ENCODE measurements at regions of chr17 and their contacts with region 1.

Region 1: DNA sequence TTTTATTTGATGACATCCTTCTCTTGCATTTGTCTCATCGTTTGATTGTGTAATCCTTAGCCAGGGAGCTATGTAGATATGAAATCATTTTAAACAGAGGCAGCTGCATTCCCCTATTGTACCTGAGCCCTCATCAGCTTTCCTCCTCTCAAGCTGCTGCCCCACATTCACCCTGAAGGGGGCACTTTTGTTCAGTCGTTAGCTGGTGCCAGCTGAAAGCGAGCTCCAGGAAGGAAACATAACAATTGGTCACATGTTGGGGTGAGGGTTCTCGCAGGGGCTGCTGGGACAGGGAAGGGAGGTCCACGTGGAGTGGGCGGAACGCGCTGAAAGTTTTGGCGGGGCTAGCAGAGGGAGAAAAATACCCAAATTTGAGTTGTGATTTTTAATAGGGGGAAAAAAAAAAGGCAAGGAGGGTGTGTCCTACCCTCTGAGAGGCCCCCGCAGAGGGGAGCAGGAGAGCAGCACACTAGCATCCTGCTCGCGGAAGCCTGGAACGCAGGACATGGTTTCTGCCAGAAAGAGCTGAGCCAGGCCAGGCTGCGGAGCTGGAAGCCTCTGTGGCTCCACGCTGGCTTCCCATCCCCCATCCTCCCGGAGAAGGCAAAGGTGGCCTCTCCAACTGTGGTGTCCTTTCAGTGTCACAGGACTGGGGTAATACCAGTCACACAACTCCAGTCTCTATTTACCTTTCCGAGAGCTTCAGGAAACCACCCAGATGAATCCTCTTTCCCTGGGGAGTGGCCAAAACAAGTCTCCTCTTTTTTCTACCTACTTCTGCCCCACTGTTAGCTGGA is 8.5 kb upstream of the MSL1 start:
- DNase-seq: peak; percentile 92
- ATAC-seq: peak; percentile 35
- H3K4me3 Mint-ChIP-seq: peak overlapping the region; percentile 58
- H3K27ac Mint-ChIP-seq: peak overlapping the region; percentile 98
- H3K4me1 Mint-ChIP-seq: peaks cover 72% of the 10 kb centered on the region
- H3K27me3 Mint-ChIP-seq: peaks cover 3% of the 10 kb centered on the region
- CTCF ChIP-seq: peak; percentile 66

Region 2: GRCh38 chr17:40026816-40027613 is 86.3 kb before region 1 on chr17:
- CTCF ChIA-PET with region 1: interaction called, 17 read pairs
- POLR2A ChIA-PET with region 1: no interaction called
- DNase-seq: peak; percentile 93
- ATAC-seq: peak; percentile 99
- H3K4me3 Mint-ChIP-seq: no peak overlapping the region
- H3K27ac Mint-ChIP-seq: no peak overlapping the region
- H3K4me1 Mint-ChIP-seq: no peaks in the 10 kb centered on the region
- H3K27me3 Mint-ChIP-seq: no peaks in the 10 kb centered on the region
- CTCF ChIP-seq: peak; percentile 95

Region 3: GRCh38 chr17:40068917-40069750 is 44.2 kb before region 1 on chr17:
- CTCF ChIA-PET with region 1: interaction called, 23 read pairs
- POLR2A ChIA-PET with region 1: interaction called, 9 read pairs
- DNase-seq: no peak
- ATAC-seq: peak; percentile 4
- H3K4me3 Mint-ChIP-seq: peak overlapping the region; percentile 53
- H3K27ac Mint-ChIP-seq: peak overlapping the region; percentile 29; the same call in 1 of the 2 replicates
- H3K4me1 Mint-ChIP-seq: peaks cover 75% of the 10 kb centered on the region
- H3K27me3 Mint-ChIP-seq: peaks cover 7% of the 10 kb centered on the region
- CTCF ChIP-seq: no peak

Region 4: DNA sequence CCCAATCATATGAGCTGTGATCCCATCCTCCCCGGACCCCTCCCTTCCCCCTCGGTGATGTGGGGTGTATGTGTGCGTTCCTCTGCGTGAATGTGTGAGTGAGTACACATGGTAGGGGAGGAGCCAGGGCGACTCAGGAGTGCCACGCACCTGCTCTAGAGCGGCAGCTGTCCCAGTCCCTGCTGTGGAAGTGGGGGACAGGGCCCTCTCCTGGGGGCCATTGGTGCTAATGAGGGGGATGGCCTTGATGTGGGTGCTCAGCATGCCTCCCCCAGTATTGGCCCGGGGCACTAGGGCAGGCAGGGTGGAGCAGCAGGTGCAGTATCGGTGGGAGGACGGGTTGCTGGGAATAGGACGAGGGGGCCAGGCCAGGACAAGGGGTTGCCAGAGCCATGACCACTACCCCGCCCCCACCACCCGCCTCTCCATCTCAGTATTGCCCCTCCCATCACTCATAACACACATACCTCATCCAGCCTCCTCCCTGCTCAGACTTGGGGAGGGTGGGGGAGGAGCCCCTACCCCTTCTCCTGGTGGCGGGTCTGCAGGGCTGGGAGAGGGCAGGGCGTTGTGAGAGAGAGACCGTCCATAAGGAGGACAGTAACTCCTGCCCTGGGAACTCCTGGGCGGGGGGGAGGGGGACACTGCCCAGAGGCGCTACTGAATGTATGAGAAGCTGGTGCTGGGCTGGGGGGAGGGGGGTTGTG is 21.5 kb before region 1 on chr17:
- CTCF ChIA-PET with region 1: interaction called, 185 read pairs
- POLR2A ChIA-PET with region 1: no interaction called
- DNase-seq: no peak
- ATAC-seq: peak; percentile 29
- H3K4me3 Mint-ChIP-seq: no peak overlapping the region
- H3K27ac Mint-ChIP-seq: no peak overlapping the region
- H3K4me1 Mint-ChIP-seq: peaks cover 23% of the 10 kb centered on the region
- H3K27me3 Mint-ChIP-seq: no peaks in the 10 kb centered on the region; the same call in 1 of the 2 replicates
- CTCF ChIP-seq: no peak

Region 5: DNA sequence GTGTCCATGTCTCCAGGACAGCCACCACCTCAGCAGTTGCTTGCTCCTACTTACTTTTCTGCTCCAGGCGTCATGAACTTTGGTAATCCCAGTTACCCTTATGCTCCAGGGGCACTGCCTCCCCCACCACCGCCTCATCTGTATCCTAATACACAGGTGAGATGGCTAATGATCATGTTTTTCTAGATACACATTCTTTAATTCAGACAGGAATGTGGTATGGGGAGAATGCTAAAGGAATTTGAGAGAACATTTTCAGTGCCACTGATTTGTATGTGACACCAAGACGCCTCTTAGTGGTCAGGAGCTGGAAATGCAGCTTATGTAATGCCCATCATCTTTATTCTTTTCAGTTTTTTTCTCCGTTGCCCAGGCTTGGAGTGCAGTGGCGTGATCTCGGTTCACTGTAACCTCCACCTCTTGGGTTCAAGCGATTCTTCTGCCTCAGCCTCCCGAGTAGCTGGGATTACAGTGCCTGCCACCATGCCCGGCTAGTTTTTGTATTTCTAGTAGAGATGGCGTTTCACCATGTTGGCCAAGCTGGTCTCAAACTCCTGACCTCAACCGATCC is 55.0 kb after region 1 on chr17:
- CTCF ChIA-PET with region 1: interaction called, 67 read pairs
- POLR2A ChIA-PET with region 1: interaction called, 4 read pairs
- DNase-seq: no peak
- ATAC-seq: peak; percentile 84
- H3K4me3 Mint-ChIP-seq: no peak overlapping the region
- H3K27ac Mint-ChIP-seq: peak overlapping the region; percentile 98
- H3K4me1 Mint-ChIP-seq: peaks cover 5% of the 10 kb centered on the region
- H3K27me3 Mint-ChIP-seq: no peaks in the 10 kb centered on the region; the same call in 1 of the 2 replicates
- CTCF ChIP-seq: no peak; the same call in 1 of the 2 replicates

Region 6: GRCh38 chr17:40203131-40203530 is 89.8 kb after region 1 on chr17:
- CTCF ChIA-PET with region 1: interaction called, 12 read pairs
- POLR2A ChIA-PET with region 1: no interaction called
- DNase-seq: no peak
- ATAC-seq: no peak
- H3K4me3 Mint-ChIP-seq: no peak overlapping the region
- H3K27ac Mint-ChIP-seq: no peak overlapping the region
- H3K4me1 Mint-ChIP-seq: no peaks in the 10 kb centered on the region
- H3K27me3 Mint-ChIP-seq: peaks cover 5% of the 10 kb centered on the region
- CTCF ChIP-seq: no peak